Calu3 (cell line): ENCODE measurements at regions of chr4 and their contacts with region 1.

Region 1: GRCh38 chr4:140135529-140136088 is 18.4 kb downstream of the MAML3 start:
- DNase-seq: no peak
- H3K4me3 Mint-ChIP-seq: no peak overlapping the region
- H3K27ac Mint-ChIP-seq: peak overlapping the region; percentile 52
- H3K4me1 Mint-ChIP-seq: peaks cover 61% of the 10 kb centered on the region
- H3K27me3 Mint-ChIP-seq: no peaks in the 10 kb centered on the region
- CTCF ChIP-seq: no peak

Region 2: GRCh38 chr4:139969635-139970266 is 165.9 kb before region 1 on chr4:
- CTCF ChIA-PET with region 1: no interaction called
- intact Hi-C with region 1: no loop called
- DNase-seq: no peak
- H3K4me3 Mint-ChIP-seq: no peak overlapping the region
- H3K27ac Mint-ChIP-seq: no peak overlapping the region
- H3K4me1 Mint-ChIP-seq: no peaks in the 10 kb centered on the region
- H3K27me3 Mint-ChIP-seq: no peaks in the 10 kb centered on the region
- CTCF ChIP-seq: no peak

Region 3: DNA sequence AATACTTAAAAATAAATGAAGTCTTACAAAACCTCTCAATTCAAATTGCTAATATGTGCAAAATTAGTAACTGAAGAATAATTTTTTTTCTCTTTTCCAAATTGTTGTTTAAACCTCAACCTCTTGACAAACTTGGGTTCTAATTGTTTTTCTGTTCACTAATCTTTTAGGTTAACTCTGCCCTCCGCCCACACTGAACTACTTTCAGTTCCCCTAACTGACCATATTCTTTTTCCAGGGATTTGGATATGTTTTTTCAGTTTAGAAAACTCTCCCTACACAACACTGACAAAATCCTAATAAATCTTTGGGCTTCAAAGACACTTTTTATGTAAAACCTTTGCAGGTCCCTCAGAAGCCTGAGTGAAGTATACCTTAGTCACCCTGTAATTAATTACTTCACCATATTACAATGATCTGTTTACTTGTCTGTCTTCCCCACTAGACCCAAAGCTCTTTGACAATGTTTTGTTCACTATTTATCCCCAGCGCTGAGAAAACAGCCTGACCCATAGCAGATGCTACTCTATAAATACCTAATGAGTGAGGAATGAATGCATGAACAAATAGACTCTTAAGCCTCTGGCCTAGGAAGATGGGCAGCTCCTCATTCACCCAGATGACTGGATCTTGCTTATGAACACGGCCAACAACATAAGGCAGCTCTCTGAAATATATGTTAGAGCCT is 116.5 kb before region 1 on chr4:
- CTCF ChIA-PET with region 1: no interaction called
- intact Hi-C with region 1: loop called (anchors 5 kb)
- DNase-seq: no peak
- H3K4me3 Mint-ChIP-seq: peak overlapping the region; percentile 53
- H3K27ac Mint-ChIP-seq: peak overlapping the region; percentile 87
- H3K4me1 Mint-ChIP-seq: peaks cover 45% of the 10 kb centered on the region
- H3K27me3 Mint-ChIP-seq: no peaks in the 10 kb centered on the region
- CTCF ChIP-seq: no peak

Region 4: DNA sequence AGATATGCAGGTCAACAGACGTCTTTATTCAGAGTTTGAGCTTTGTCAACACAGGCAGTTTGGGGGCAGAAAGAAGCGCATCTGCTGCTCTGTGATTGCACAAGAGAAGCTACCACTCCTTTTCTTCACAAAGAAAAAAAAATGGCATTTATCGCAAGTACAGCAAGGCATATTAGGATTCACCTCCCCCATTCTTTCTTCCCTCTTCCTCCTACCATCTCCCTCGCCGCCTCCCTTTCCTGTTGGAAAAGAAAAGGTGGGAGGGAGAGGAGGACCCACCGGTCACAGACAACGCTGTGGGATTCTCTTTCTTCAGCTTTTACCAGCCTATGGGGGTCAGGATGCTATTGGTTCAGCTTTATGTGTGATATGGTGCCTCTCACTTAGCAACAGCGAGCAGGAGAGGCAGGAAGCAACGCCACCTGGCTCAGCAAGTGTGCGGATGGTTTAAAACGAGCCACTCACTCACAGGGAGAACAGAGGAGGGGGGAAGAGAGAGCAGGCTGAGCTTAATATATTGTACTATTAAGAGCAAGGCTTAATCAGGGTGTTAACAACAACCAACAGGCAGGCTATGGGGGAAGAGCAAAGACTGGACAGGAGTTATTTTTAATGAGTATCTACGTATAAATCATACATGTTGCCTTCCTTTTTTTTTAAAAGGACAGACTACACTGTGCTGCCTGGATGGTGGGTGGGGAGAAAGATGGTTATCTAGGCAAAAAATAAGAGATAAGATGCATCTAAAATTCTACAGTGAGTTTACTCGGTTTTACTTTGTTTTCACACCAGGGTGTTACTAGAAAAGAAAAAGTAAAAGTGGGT is 86.4 kb before region 1 on chr4:
- CTCF ChIA-PET with region 1: no interaction called
- intact Hi-C with region 1: loop called (anchors 5 kb)
- DNase-seq: peak; percentile 26
- H3K4me3 Mint-ChIP-seq: peak overlapping the region; percentile 65
- H3K27ac Mint-ChIP-seq: peak overlapping the region; percentile 78
- H3K4me1 Mint-ChIP-seq: peaks cover 35% of the 10 kb centered on the region
- H3K27me3 Mint-ChIP-seq: no peaks in the 10 kb centered on the region
- CTCF ChIP-seq: no peak

Region 5: GRCh38 chr4:140095694-140096482 is 39.7 kb before region 1 on chr4:
- CTCF ChIA-PET with region 1: interaction called, 3 read pairs
- intact Hi-C with region 1: loop called (anchors 5 kb)
- DNase-seq: no peak
- H3K4me3 Mint-ChIP-seq: no peak overlapping the region
- H3K27ac Mint-ChIP-seq: peak overlapping the region; percentile 26
- H3K4me1 Mint-ChIP-seq: peaks cover 57% of the 10 kb centered on the region
- H3K27me3 Mint-ChIP-seq: no peaks in the 10 kb centered on the region
- CTCF ChIP-seq: no peak